K562 (cell line): ENCODE measurements at regions of chr22 and their contacts with region 1.

Region 1: DNA sequence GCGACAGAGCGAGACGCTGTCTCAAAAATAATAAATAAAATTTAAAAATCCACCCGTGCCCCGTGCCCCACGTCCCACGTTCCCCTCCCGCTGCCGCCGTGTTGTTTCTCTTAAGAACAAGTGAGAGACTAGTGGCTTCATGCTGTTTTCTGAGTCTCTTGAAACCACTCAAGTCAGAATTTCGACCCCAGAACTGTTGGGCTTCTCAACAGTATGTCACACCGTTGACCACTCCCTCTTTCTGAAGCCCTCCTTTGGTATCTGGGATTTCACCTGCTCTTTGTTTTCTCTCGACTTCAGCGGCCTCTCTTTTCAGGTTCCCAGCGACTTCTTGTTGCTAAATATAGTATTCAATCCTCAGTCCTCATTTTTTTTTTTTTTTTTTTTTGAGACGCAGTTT is 974 bp downstream of the PPIL2 start:
- DNase-seq: peak; percentile 73 to 80 (median 78)
- ATAC-seq: peak; percentile 29
- H3K4me3 ChIP-seq: peak overlapping the region; percentile 44
- H3K27ac ChIP-seq: peak overlapping the region; percentile 84
- H3K4me1 ChIP-seq: peaks cover 14 to 24% of the 10 kb centered on the region in 2 experiments; a peak in 4 of 5 replicates
- H3K27me3 ChIP-seq: no peaks in the 10 kb centered on the region
- CTCF ChIP-seq: no peak; a peak in 1 of 6 replicates
- EP300 ChIP-seq: no peak
- POLR2A ChIP-seq: no peak
- RAD21 ChIP-seq: no peak

Region 2: GRCh38 chr22:21629262-21630149 is 37.3 kb before region 1 on chr22 and contains the start of gene YDJC:
- CTCF ChIA-PET with region 1: no interaction called
- POLR2A ChIA-PET with region 1: interaction called, 15 read pairs
- in situ Hi-C with region 1: no loop called
- intact Hi-C with region 1: no loop called
- DNase-seq: peak; percentile 100
- ATAC-seq: peak; percentile 83
- H3K4me3 ChIP-seq: peak within 1 kb of the TSS; percentile 59
- H3K27ac ChIP-seq: peak within 1 kb of the TSS; percentile 89
- H3K4me1 ChIP-seq: peaks cover 57 to 85% of the 10 kb centered on the region in 2 experiments
- H3K27me3 ChIP-seq: no peaks in the 10 kb centered on the region
- CTCF ChIP-seq: peak in 1 of 3 experiments; percentile 99; a peak in 2 of 6 replicates
- EP300 ChIP-seq: peak; percentile 90
- POLR2A ChIP-seq: no peak
- RAD21 ChIP-seq: no peak
- polyA plus RNA-seq, gene YDJC: 13.5 to 23.5 TPM

Region 3: GRCh38 chr22:21652010-21652546 is 14.7 kb before region 1 on chr22:
- CTCF ChIA-PET with region 1: interaction called, 3 read pairs
- POLR2A ChIA-PET with region 1: interaction called, 167 read pairs
- in situ Hi-C with region 1: no loop called
- intact Hi-C with region 1: loop called (anchors 1 kb)
- DNase-seq: peak; percentile 100
- ATAC-seq: peak; percentile 94
- H3K4me3 ChIP-seq: peak overlapping the region; percentile 47
- H3K27ac ChIP-seq: peak overlapping the region; percentile 69
- H3K4me1 ChIP-seq: peaks cover 35 to 42% of the 10 kb centered on the region in 2 experiments
- H3K27me3 ChIP-seq: no peaks in the 10 kb centered on the region
- CTCF ChIP-seq: no peak
- EP300 ChIP-seq: peak; percentile 33; the same call in 1 of the 2 replicates
- POLR2A ChIP-seq: no peak
- RAD21 ChIP-seq: no peak

Region 4: DNA sequence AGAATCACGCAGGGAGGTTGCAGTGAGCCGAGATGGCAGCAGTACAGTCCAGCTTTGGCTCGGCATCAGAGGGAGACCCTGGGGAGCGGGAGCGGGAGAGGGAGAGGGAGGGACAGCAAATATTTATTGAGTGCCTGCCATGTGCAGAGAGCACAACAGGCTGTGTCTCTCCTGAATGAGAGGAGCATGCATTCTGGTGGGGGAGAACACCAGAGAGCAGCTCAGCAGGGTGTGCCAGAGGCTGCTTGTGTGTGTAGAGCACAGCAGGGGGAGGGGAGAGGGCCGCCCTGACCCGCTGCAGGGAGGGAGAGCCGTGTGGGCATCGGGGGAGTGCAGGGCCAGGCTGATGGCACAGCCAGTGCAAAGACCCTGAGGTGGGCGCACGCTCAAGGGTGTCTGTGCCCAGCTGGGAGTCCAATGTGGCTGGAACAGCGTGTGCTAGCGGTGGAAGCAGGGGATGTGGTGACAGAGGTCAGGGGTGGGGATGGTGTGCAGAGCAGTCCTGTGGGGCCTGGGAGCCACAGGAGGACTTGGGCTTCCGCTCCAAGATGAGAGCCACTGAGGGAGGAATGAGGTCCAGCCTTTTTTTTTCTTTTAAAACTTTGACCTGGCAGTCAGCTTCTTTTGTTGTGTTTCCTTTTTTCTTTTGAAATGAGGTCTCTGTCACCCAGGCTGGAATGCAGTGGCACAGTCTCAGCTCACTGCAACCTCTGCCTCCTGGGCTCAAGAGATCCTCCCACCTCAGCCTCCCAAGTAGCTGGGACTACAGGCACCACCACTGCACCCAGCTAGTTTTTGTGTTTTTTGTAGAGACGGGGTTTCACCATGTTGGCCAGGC is 11.0 kb after region 1 on chr22:
- CTCF ChIA-PET with region 1: no interaction called
- POLR2A ChIA-PET with region 1: interaction called, 52 read pairs
- in situ Hi-C with region 1: no loop called
- intact Hi-C with region 1: no loop called
- DNase-seq: peak in 1 of 4 experiments; percentile 56
- ATAC-seq: peak; percentile 11
- H3K4me3 ChIP-seq: no peak overlapping the region
- H3K27ac ChIP-seq: no peak overlapping the region
- H3K4me1 ChIP-seq: peaks cover 0 to 29% of the 10 kb centered on the region in 2 experiments; a peak in 2 of 5 replicates
- H3K27me3 ChIP-seq: no peaks in the 10 kb centered on the region
- CTCF ChIP-seq: no peak
- EP300 ChIP-seq: no peak
- POLR2A ChIP-seq: peak; percentile 68
- RAD21 ChIP-seq: no peak

Region 5: DNA sequence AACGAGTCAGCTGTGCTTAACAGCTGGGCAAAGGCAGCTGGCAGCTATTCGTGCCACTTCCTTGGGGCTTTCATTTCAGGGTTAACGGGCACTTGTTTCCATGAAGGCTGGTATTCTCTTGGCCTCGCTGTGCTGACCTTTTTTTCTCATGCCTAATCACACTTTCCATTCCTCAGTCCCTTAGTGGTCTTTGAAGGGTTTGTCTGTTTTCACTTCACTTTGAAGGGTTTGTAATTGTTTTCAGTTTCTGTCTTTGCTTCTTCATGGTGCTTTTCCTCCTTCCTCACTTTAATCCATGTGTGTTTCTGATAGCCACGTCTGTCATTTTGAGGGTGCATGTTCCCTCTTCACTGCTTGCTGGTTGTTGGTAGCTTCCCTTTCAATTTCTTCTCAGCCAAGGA is 23.6 kb after region 1 on chr22:
- CTCF ChIA-PET with region 1: no interaction called
- POLR2A ChIA-PET with region 1: interaction called, 17 read pairs
- in situ Hi-C with region 1: no loop called
- intact Hi-C with region 1: no loop called
- DNase-seq: no peak
- ATAC-seq: no peak
- H3K4me3 ChIP-seq: no peak overlapping the region
- H3K27ac ChIP-seq: no peak overlapping the region
- H3K4me1 ChIP-seq: peaks cover 5 to 58% of the 10 kb centered on the region in 2 experiments; a peak in 3 of 5 replicates
- H3K27me3 ChIP-seq: no peaks in the 10 kb centered on the region
- CTCF ChIP-seq: no peak
- EP300 ChIP-seq: no peak
- POLR2A ChIP-seq: no peak
- RAD21 ChIP-seq: no peak

Region 6: GRCh38 chr22:21698430-21699329 is 31.9 kb after region 1 on chr22:
- CTCF ChIA-PET with region 1: no interaction called
- POLR2A ChIA-PET with region 1: interaction called, 37 read pairs
- in situ Hi-C with region 1: no loop called
- intact Hi-C with region 1: loop called (anchors 2 kb)
- DNase-seq: peak in 3 of 4 experiments; percentile 65 to 76 (median 67)
- ATAC-seq: peak; percentile 51
- H3K4me3 ChIP-seq: no peak overlapping the region
- H3K27ac ChIP-seq: no peak overlapping the region
- H3K4me1 ChIP-seq: peaks cover 9 to 50% of the 10 kb centered on the region in 2 experiments; a peak in 4 of 5 replicates
- H3K27me3 ChIP-seq: peaks cover 21 to 23% of the 10 kb centered on the region in 2 experiments
- CTCF ChIP-seq: 0 out of 6 replicates have a peak, but pooled peaks of 1 of the 3 experiments have one; percentile 6
- EP300 ChIP-seq: no peak
- POLR2A ChIP-seq: no peak
- RAD21 ChIP-seq: peak in 1 of 2 experiments; percentile 12; a peak in 1 of 4 replicates

Region 7: DNA sequence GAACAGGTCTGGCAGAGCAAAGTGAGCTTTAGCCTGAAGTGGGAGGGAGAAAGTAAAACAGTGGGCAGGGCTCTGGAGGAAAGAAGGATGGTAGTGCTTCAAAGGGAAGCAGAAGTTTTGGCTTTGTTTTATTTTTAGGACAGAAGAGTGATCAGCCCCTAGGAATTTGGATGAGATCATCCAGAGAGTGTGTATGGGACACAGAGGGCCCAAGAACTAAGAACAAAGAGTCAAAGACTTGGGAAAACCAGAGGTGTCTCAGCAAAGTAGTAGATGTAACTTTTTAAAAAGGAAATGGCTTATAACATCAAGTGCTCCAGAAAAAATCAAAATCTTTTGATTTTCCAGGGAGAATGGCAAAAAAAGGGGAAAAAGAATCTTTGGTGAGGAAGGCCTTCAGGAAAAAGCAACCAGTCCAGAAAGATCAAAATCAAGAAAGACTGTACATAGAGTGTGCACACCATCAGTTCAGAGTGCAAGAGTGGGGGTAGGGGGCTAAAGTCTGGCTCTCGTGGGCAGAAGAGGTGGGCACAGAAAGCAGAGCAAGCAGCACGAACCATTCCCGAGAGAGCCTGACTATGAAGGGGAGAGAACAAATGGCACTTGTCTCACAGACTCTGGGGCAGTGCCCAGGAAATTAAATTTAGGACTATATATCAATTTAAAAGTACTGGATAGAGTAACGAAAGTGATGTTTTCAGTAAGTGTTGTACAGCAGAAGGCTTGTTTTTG is 170.6 kb after region 1 on chr22:
- CTCF ChIA-PET with region 1: no interaction called
- POLR2A ChIA-PET with region 1: no interaction called
- in situ Hi-C with region 1: no loop called
- intact Hi-C with region 1: no loop called
- DNase-seq: peak in 1 of 4 experiments; percentile 73
- ATAC-seq: peak; percentile 16
- H3K4me3 ChIP-seq: no peak overlapping the region
- H3K27ac ChIP-seq: no peak overlapping the region
- H3K4me1 ChIP-seq: peaks cover 21% of the 10 kb centered on the region in 2 experiments
- H3K27me3 ChIP-seq: no peaks in the 10 kb centered on the region
- CTCF ChIP-seq: no peak
- EP300 ChIP-seq: no peak
- POLR2A ChIP-seq: no peak
- RAD21 ChIP-seq: no peak